A549 (cell line): ENCODE measurements at regions of chr11 and their contacts with region 1.

Region 1: DNA sequence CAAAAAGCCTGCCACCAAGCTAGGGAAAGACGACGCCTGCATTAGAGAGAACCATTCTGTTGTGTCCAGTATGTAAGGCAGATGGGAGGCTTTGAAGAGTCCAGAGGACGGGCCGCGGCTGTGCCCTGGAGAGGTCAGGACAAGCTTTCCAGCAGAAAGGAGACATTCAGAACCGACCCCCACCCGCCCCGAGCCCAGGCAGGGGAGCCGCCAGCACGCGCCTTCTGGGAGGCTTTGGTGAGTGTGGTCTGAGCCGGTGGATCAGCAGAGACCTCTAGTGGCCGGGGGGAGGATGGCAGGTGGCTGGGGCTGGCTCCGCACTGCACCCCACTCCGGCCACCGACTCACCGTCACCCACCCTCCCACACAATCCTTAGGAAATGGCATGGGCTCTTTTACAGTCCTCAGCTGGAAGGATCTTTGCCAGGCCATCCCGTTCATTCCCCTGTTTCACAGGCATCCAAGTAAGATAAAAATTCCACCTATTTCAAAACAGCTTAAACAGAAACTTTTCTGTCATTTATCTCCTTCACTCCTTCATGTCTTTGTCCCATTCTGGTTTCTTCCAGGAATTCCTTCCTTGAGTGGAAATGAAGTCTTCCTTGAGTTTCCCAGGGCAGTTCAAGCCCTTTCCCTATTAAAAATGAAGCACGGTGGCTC is 91.2 kb downstream of the FEZ1 start:
- DNase-seq: peak; percentile 14 to 43
- ATAC-seq: peak; percentile 83 to 97
- H3K4me3 ChIP-seq: no peak overlapping the region
- H3K27ac ChIP-seq: no peak overlapping the region
- H3K4me1 ChIP-seq: no peaks in the 10 kb centered on the region
- CTCF ChIP-seq: peak; percentile 62
- EP300 ChIP-seq: no peak
- POLR2A ChIP-seq: no peak
- RAD21 ChIP-seq: peak; percentile 68

Region 2: GRCh38 chr11:125373426-125374391 is 31.2 kb before region 1 on chr11:
- CTCF ChIA-PET with region 1: interaction called, 10 read pairs
- POLR2A ChIA-PET with region 1: no interaction called
- DNase-seq: no peak
- ATAC-seq: no peak
- H3K4me3 ChIP-seq: no peak overlapping the region
- H3K27ac ChIP-seq: no peak overlapping the region
- H3K4me1 ChIP-seq: no peaks in the 10 kb centered on the region
- CTCF ChIP-seq: no peak
- EP300 ChIP-seq: no peak
- POLR2A ChIP-seq: no peak
- RAD21 ChIP-seq: no peak

Region 3: DNA sequence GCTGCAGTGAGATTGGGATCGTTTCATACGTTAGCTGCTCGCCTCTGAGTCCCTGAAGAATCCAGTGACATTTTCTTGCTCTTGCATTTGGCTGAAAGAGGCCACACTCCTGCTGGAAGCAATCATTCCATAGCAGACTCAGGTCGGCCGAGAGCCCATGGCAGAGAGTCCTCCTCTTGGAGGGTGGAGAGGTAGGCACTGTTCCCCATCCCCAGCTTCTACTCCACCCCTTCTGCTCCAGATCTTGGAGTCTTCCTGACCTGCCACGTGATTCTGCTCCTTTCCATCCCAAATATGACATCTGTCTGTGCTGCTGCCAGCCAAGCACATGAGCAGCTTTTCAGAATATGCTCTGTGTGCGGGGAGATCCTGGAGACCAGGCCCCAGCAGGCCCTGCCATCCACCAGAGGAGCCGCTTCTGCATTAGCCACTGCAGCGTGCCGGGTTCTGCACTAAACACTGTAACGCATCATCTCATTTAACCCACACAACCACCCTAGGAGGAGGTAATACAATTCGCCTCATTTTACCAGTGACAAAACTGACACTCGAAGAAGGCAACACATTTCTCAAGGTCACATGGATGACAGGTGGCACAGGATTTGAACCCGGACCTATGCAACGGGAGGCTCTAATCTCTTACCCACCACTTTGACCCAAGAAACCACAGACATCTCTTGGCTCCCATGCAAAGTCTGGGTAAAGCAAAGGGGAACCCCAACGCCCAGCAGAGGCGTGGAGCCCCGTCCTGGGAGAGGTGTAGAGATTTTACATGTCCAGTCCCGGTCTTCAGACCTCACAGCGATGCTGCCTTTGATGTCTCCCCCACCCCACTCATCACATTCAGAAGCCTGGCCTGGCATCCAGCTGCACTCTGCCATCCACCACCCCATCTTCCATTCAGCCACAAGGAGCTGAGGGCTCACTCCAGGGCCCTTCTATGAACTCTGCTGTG is 12.4 kb after region 1 on chr11:
- CTCF ChIA-PET with region 1: interaction called, 17 read pairs
- POLR2A ChIA-PET with region 1: no interaction called
- DNase-seq: no peak
- ATAC-seq: no peak
- H3K4me3 ChIP-seq: no peak overlapping the region
- H3K27ac ChIP-seq: no peak overlapping the region
- H3K4me1 ChIP-seq: no peaks in the 10 kb centered on the region
- CTCF ChIP-seq: no peak
- EP300 ChIP-seq: no peak
- POLR2A ChIP-seq: no peak
- RAD21 ChIP-seq: no peak

Region 4: DNA sequence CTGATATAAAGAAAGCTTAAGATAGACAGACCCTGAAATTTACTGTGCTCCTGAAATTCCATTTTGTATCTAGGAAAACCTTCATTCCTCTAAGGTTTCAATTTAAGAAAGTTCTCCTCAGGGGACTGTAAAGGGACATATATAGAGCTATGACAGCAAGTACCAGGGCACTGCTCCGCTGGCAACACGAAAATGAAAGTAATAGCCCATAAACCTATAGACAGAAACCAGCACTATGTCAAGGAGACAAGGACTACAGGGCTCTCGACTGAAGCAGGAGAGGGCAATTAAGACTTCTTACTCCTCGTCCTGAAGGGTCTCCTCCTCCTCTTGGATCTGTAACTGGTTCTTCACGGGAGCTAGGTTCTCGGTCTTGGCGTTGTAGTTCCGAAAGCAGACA is 84.3 kb after region 1 on chr11:
- CTCF ChIA-PET with region 1: no interaction called
- POLR2A ChIA-PET with region 1: no interaction called
- DNase-seq: no peak
- ATAC-seq: peak in 1 of 2 experiments; percentile 38; a peak in 1 of 6 replicates
- H3K4me3 ChIP-seq: no peak overlapping the region
- H3K27ac ChIP-seq: no peak overlapping the region
- H3K4me1 ChIP-seq: no peaks in the 10 kb centered on the region
- CTCF ChIP-seq: no peak
- EP300 ChIP-seq: no peak
- POLR2A ChIP-seq: no peak
- RAD21 ChIP-seq: no peak